PC-3 (cell line): ENCODE measurements at regions of chr12 and their contacts with region 1.

Region 1: GRCh38 chr12:25997201-25997963 is 38.9 kb downstream of the RASSF8 start:
- DNase-seq: peak; percentile 100
- ATAC-seq: peak; percentile 80
- H3K4me3 ChIP-seq: peak overlapping the region; percentile 12; the same call in 1 of the 2 replicates
- H3K27ac ChIP-seq: peak overlapping the region; percentile 27
- H3K4me1 ChIP-seq: peaks cover 43% of the 10 kb centered on the region
- H3K27me3 ChIP-seq: no peaks in the 10 kb centered on the region
- CTCF ChIP-seq: no peak

Region 2: DNA sequence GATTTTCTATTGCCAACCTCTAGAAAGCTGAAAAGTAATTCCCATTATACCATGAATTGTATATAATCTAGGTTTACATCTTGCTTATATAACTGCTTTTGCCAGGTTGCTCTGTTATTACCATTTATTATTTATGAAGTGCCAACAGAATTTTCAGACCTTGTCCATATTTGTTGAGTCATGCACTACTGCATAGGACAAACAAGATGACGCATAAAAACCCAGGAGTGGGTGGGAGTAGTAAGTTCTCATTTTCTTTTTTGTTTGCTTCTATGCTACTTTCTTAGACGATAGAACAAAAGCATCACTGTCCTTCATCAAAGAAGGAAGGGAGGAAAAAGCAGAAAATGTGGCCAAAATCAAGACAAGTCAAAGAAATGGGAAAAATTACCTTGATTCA is 157.9 kb before region 1 on chr12:
- CTCF ChIA-PET with region 1: no interaction called
- POLR2A ChIA-PET with region 1: no interaction called
- intact Hi-C with region 1: loop called (anchors 1 kb)
- DNase-seq: peak; percentile 98
- ATAC-seq: peak; percentile 98
- H3K4me3 ChIP-seq: peak overlapping the region; percentile 1; the same call in 1 of the 2 replicates
- H3K27ac ChIP-seq: peak overlapping the region; percentile 81
- H3K4me1 ChIP-seq: peaks cover 23% of the 10 kb centered on the region
- H3K27me3 ChIP-seq: no peaks in the 10 kb centered on the region
- CTCF ChIP-seq: no peak

Region 3: GRCh38 chr12:25970916-25971653 is 26.3 kb before region 1 on chr12:
- CTCF ChIA-PET with region 1: no interaction called
- POLR2A ChIA-PET with region 1: interaction called, 3 read pairs
- intact Hi-C with region 1: loop called (anchors 1 kb)
- DNase-seq: no peak
- ATAC-seq: no peak
- H3K4me3 ChIP-seq: no peak overlapping the region
- H3K27ac ChIP-seq: peak overlapping the region; percentile 81
- H3K4me1 ChIP-seq: peaks cover 39% of the 10 kb centered on the region
- H3K27me3 ChIP-seq: no peaks in the 10 kb centered on the region
- CTCF ChIP-seq: peak; percentile 44; the same call in 1 of the 2 replicates

Region 4: GRCh38 chr12:25983625-25984024 is 13.8 kb before region 1 on chr12:
- CTCF ChIA-PET with region 1: interaction called, 3 read pairs
- POLR2A ChIA-PET with region 1: interaction called, 24 read pairs
- intact Hi-C with region 1: no loop called
- DNase-seq: no peak
- ATAC-seq: no peak
- H3K4me3 ChIP-seq: no peak overlapping the region
- H3K27ac ChIP-seq: no peak overlapping the region
- H3K4me1 ChIP-seq: no peaks in the 10 kb centered on the region
- H3K27me3 ChIP-seq: no peaks in the 10 kb centered on the region
- CTCF ChIP-seq: no peak